WTC11 (cell line): ENCODE measurements at regions of chr1 and their contacts with region 1.

Region 1: DNA sequence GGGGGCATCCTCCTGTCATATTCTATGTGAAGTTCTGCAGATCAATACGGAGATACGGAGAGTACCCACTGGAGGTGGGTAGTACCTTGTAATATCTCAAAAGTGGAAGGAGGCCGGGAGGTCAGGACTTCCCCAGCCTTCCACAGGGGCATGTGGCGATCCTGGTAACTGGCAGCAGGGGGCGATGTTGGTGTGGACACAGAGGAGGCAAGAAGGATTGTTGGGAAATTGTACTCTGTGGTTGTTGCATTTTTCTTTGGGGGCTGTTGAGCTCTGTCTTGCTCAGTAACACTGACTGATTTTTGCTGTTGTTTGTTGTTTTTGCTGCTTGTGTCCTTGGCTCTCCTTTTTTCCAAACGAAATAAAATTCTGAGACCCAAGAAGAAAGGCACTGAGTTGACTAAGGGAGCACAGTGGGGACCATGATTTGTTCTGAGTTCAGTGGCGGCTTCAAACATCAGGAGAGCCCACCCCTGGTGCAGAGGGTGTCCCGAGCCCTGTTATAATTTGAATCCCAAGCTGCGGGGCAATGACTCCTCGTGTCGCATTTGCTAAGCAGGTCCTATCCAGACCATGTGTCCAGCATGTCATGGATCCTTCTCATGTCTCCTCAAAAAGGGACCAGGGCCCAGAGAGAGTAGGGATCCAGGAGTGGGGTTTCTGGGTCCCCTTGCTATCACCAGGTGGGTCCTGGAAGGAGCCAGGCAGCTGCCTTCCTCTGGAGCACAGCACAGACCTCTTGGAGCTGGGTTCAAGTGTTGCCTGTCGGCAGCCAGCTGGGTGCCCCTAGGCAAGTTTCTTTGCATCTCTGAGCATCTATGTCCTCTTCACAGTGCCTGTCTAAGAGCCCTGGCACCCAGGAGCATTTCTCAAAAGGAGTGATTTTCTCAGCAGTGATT is 22.8 kb downstream of the LHX4 start:
- DNase-seq: peak; percentile 92
- ATAC-seq: peak; percentile 54
- H3K4me3 Mint-ChIP-seq: no peak overlapping the region
- H3K27ac Mint-ChIP-seq: no peak overlapping the region; the same call in 1 of the 2 replicates
- H3K4me1 Mint-ChIP-seq: peaks cover 48% of the 10 kb centered on the region
- H3K27me3 Mint-ChIP-seq: no peaks in the 10 kb centered on the region
- CTCF ChIP-seq: peak; percentile 86

Region 2: DNA sequence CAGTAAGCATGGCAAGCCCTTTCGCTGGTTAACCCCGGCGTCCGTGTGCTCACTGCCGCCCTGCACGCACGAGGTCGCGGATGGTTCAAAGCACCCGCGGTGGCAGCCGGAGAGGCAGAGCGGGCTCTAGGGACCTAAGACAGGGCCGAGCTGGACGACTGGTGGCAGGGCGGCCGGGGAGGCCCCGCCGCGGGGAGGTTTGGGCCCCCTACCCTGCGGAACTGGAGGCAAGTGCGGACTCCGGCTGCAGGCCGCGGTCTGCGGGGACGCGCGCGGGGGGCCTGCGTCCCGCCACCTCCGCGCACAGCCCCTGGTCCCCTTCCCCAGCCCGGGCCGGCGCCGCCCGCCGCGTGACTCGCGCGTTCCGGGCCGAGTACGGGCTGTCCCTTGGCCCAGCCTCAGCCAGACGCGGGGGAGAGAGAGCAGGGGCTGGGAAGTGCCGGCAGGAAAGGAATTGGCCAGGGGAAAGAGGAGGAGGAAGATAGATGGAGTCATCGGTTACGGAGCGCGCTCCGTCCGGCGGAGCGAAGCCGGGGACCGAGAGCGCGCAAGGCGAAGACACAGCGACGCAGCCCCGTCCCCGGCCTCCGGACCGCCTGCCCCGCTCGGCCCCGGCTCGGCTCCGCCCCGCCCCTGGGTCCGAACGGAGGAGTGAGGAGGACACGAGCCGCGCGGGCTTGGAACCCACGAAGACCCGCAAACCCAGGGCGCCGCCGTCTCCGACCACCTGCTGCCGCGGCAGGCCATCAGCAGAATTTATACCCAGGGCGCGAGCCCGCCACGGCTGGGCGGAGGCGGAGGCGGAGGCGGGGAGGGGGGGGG is 23.5 kb before region 1 on chr1:
- CTCF ChIA-PET with region 1: interaction called, 10 read pairs
- POLR2A ChIA-PET with region 1: interaction called, 3 read pairs
- DNase-seq: peak; percentile 68
- ATAC-seq: peak; percentile 29
- H3K4me3 Mint-ChIP-seq: peak overlapping the region; percentile 63
- H3K27ac Mint-ChIP-seq: no peak overlapping the region
- H3K4me1 Mint-ChIP-seq: peaks cover 41% of the 10 kb centered on the region
- H3K27me3 Mint-ChIP-seq: peaks cover 78% of the 10 kb centered on the region
- CTCF ChIP-seq: no peak

Region 3: DNA sequence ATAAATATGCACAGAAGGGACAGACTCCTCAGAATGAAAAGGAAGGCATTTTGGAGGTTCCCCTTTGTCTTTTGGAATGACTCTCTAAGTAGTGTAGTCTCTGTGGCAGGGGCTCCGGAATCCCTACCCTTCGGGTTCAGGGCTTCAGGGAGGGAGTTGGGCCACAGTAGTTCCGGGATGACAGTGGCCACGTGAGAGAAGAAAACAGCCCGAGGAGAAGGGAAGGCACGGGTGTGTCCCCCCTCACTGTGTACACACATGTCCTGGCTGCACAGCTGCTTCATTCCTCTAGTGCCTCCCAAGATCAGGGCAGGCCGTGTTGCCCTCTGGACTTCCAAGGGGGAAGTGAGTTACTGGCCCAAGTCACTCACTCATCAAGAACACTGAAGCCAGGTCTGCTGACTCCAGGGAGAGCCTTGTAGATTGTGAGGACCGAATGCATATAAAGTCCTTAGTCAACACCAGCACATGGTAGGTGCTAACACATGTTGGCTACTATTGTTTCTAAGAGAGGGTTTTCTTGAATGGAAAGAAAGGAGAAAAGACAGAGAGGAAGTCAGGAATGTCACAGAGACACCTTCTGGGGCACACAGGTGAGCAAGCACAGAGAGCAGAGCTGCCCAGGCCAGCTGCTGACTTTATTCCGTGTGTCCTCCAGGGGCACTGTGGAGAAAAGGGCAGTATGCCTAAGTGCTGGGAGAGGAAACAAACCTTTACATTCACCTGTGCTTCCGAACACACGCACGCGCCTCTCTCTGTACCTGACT is 17.1 kb after region 1 on chr1:
- CTCF ChIA-PET with region 1: interaction called, 31 read pairs
- POLR2A ChIA-PET with region 1: no interaction called
- DNase-seq: peak; percentile 71
- ATAC-seq: peak; percentile 85
- H3K4me3 Mint-ChIP-seq: no peak overlapping the region
- H3K27ac Mint-ChIP-seq: peak overlapping the region; percentile 51
- H3K4me1 Mint-ChIP-seq: peaks cover 59% of the 10 kb centered on the region
- H3K27me3 Mint-ChIP-seq: no peaks in the 10 kb centered on the region
- CTCF ChIP-seq: no peak; the same call in 1 of the 2 replicates

Region 4: DNA sequence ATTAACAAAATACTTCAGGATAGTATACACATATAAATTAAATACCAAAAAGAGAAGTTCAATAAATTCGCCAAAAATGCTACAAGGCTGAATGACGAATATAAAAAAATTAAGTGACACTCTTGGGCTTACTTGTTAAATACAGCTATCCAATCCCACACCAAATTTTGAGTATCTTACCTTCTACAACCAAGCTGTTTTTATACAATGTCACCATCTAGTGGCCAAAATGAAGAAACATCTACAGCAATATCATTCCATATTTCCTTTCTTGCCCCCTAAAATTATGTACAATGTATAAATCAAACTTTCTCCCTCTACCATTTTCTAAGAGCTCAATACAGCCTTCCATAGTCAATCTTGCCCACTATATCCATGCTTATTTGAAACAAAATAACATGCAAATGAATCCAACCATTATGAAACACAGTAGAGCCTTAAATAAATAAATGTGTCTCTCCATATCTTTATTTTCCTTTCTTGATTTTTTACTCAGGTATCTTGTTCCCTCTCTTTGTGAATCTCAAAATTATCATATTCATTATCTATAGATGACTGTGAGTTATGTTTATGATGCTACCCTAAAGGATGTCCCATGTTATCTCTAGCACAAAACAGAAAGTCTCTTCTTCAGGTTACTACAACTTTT is 163.2 kb after region 1 on chr1:
- CTCF ChIA-PET with region 1: interaction called, 17 read pairs
- POLR2A ChIA-PET with region 1: interaction called, 3 read pairs
- DNase-seq: no peak
- ATAC-seq: no peak
- H3K4me3 Mint-ChIP-seq: no peak overlapping the region
- H3K27ac Mint-ChIP-seq: no peak overlapping the region
- H3K4me1 Mint-ChIP-seq: no peaks in the 10 kb centered on the region
- H3K27me3 Mint-ChIP-seq: no peaks in the 10 kb centered on the region
- CTCF ChIP-seq: peak; percentile 61; the same call in 1 of the 2 replicates